T-cell (primary cell): ENCODE measurements at regions of chr1 and their contacts with region 1.

Region 1: GRCh38 chr1:246893191-246893939 is 38.4 kb downstream of the AHCTF1 start:
- DNase-seq: no peak
- ATAC-seq: no peak
- H3K4me3 ChIP-seq: no peak overlapping the region
- H3K4me3 Mint-ChIP-seq: no peak overlapping the region
- H3K27ac ChIP-seq: no peak overlapping the region
- H3K27ac Mint-ChIP-seq: no peak overlapping the region
- H3K4me1 ChIP-seq: no peaks in the 10 kb centered on the region
- H3K4me1 Mint-ChIP-seq: peaks cover 0 to 4% (median 0%) of the 10 kb centered on the region in 3 donors
- H3K27me3 ChIP-seq: no peaks in the 10 kb centered on the region
- H3K27me3 Mint-ChIP-seq: no peaks in the 10 kb centered on the region

Region 2: GRCh38 chr1:246875041-246876026 is 18.0 kb before region 1 on chr1:
- CTCF ChIA-PET with region 1: interaction called in 1 of 2 experiments, 13 read pairs
- POLR2A ChIA-PET with region 1: no interaction called
- DNase-seq: no peak
- ATAC-seq: no peak
- H3K4me3 ChIP-seq: no peak overlapping the region
- H3K4me3 Mint-ChIP-seq: no peak overlapping the region
- H3K27ac ChIP-seq: no peak overlapping the region
- H3K27ac Mint-ChIP-seq: no peak overlapping the region
- H3K4me1 ChIP-seq: no peaks in the 10 kb centered on the region
- H3K4me1 Mint-ChIP-seq: peaks cover 21 to 28% (median 24%) of the 10 kb centered on the region in 3 donors
- H3K27me3 ChIP-seq: no peaks in the 10 kb centered on the region
- H3K27me3 Mint-ChIP-seq: no peaks in the 10 kb centered on the region